CD8-positive, alpha-beta T cell (primary cell): ENCODE measurements at regions of chr13 and their contacts with region 1.

Region 1: DNA sequence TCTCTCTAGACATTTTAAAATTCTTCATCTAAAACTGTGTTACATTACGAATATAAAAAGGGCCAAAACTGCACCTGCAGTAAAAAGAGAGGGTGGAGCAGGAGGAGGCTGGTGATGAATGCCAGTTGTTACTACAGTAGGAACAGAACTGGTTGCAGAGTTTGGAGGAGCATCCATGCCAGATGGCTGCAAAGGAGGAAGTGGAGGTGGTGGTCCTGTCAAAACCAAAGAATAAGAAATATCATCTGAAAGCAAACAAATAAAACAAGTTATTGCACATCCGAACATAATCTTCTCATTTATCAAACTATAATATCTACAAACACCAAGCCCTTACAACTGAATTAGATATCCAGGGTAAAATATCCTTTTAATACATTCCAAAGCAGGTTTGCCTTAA is 40.1 kb downstream of the RBM26 start:
- DNase-seq: no peak
- ATAC-seq: no peak
- H3K4me3 ChIP-seq: no peak overlapping the region
- H3K4me3 Mint-ChIP-seq: no peak overlapping the region
- H3K27ac ChIP-seq: no peak overlapping the region
- H3K27ac Mint-ChIP-seq: no peak overlapping the region
- H3K4me1 ChIP-seq: no peaks in the 10 kb centered on the region
- H3K4me1 Mint-ChIP-seq: peaks cover 14% of the 10 kb centered on the region
- H3K27me3 ChIP-seq: no peaks in the 10 kb centered on the region
- H3K27me3 Mint-ChIP-seq: no peaks in the 10 kb centered on the region
- CTCF ChIP-seq: no peak

Region 2: DNA sequence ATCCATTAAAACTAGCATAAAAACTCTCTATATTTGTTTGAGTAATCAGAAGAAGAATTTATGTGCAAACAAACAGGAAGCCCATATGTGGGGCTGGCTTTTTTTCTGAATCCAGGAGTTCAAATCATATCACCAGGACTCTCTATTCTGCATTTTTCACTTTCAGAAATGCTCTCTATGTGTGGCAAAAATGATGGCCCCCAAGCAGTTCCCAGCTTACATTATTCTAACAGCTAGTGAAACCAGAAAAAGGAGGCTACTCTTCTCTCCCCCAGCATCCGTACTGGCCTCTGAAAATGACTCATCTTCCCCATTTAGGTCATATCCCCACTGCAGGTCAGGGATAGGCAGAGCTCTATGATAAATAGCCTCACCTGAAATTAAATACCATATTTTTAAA is 19.7 kb after region 1 on chr13:
- CTCF ChIA-PET with region 1: interaction called, 3 read pairs
- POLR2A ChIA-PET with region 1: no interaction called
- intact Hi-C with region 1: loop called in 1 of 2 experiments (anchors 2 kb)
- DNase-seq: peak in 3 of 9 experiments; percentile 21 to 54 (median 31)
- ATAC-seq: peak; percentile 45
- H3K4me3 ChIP-seq: no peak overlapping the region
- H3K4me3 Mint-ChIP-seq: peak overlapping the region; percentile 11
- H3K27ac ChIP-seq: no peak overlapping the region
- H3K27ac Mint-ChIP-seq: peak overlapping the region; percentile 45
- H3K4me1 ChIP-seq: peaks cover 57% of the 10 kb centered on the region
- H3K4me1 Mint-ChIP-seq: peaks cover 81% of the 10 kb centered on the region
- H3K27me3 ChIP-seq: no peaks in the 10 kb centered on the region
- H3K27me3 Mint-ChIP-seq: no peaks in the 10 kb centered on the region
- CTCF ChIP-seq: no peak